ENCODE measurements at regions of chrX and their contacts with region 1.

Region 1: GRCh38 chrX:71068049-71068763 is at the start of gene SNX12:
- DNase-seq: peak; percentile 84 to 96
- H3K4me3 ChIP-seq: peak within 1 kb of the TSS; percentile 55 to 68
- H3K27ac ChIP-seq: peak within 1 kb of the TSS; percentile 70 to 85
- H3K4me1 ChIP-seq: peaks cover 0 to 4% of the 10 kb centered on the region in 2 donors
- H3K27me3 ChIP-seq: no peaks in the 10 kb centered on the region
- CTCF ChIP-seq: peak in 1 of 3 experiments; percentile 92
- total RNA-seq, gene SNX12: 31.2 TPM

Region 2: GRCh38 chrX:71095543-71095911 is 27.3 kb after region 1 on chrX and contains the start of gene FOXO4:
- intact Hi-C with region 1: loop called (anchors 1 kb)
- DNase-seq: peak; percentile 74 to 93
- H3K4me3 ChIP-seq: peak within 1 kb of the TSS; percentile 55 to 64
- H3K27ac ChIP-seq: peak within 1 kb of the TSS; percentile 49 to 73
- H3K4me1 ChIP-seq: peaks cover 0 to 4% of the 10 kb centered on the region in 2 donors
- H3K27me3 ChIP-seq: no peaks in the 10 kb centered on the region
- CTCF ChIP-seq: no peak
- total RNA-seq, gene FOXO4: 8.0 TPM

Region 3: DNA sequence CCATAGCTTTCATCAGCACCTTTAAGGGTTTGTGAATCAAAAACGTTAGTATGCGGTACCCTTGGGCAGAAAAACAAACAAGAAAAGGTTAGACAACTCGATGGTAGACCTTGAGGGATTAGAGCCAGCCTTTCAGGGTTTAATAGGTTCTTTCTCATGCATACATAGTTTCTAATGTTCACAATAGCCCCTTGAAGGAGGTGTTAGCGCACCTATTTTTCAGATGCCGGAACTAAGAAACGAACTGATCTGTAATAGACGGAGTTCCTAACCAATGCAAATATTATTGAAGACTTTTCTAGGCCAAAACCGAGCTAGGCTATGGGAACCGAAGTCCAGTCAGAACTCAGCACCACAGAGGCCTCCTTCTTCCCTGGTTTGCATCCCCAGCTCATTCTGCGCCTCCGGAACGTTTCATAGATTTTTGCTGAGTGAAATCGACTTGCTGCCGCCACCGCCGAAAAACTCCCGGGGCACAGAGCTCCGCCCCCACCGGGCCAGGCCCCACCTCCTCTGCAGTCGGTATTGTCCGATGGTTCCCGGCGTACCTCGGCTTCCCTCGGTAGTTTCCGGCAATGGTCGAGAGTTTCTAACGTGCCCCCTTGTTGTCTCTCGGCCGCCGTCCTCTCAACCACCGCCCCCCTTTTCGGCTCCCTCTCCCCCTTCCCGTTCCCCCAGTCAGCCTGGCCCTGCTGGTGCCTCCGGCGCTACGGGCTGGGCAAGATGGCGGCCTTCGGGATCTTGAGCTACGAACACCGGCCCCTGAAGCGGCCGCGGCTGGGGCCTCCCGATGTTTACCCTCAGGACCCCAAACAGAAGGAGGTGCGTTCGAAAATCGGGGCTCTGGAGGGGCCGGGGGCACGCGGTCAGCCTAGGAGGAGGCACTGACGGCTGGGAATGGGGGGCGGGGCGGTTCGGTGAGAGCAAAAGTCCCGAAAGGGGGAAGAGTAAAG is 50.1 kb after region 1 on chrX and contains the start of gene MED12:
- intact Hi-C with region 1: loop called (anchors 1 kb)
- DNase-seq: peak; percentile 33 to 86
- H3K4me3 ChIP-seq: peak within 1 kb of the TSS; percentile 61 to 62
- H3K27ac ChIP-seq: peak within 1 kb of the TSS; percentile 66 to 69
- H3K4me1 ChIP-seq: peaks cover 0 to 4% of the 10 kb centered on the region in 2 donors
- H3K27me3 ChIP-seq: no peaks in the 10 kb centered on the region
- CTCF ChIP-seq: no peak
- total RNA-seq, gene MED12: 36.9 TPM

Region 4: GRCh38 chrX:71144651-71145050 is 76.4 kb after region 1 on chrX and contains the start of gene NLGN3:
- intact Hi-C with region 1: no loop called
- DNase-seq: no peak
- H3K4me3 ChIP-seq: peak within 1 kb of the TSS; percentile 30 to 55
- H3K27ac ChIP-seq: no peak within 1 kb of the TSS
- H3K4me1 ChIP-seq: no peaks in the 10 kb centered on the region
- H3K27me3 ChIP-seq: no peaks in the 10 kb centered on the region
- CTCF ChIP-seq: no peak
- total RNA-seq, gene NLGN3: 0.21 TPM